Prostate gland (tissue), 2 donors: ENCODE measurements at regions of chr4 and their contacts with region 1.

Region 1: DNA sequence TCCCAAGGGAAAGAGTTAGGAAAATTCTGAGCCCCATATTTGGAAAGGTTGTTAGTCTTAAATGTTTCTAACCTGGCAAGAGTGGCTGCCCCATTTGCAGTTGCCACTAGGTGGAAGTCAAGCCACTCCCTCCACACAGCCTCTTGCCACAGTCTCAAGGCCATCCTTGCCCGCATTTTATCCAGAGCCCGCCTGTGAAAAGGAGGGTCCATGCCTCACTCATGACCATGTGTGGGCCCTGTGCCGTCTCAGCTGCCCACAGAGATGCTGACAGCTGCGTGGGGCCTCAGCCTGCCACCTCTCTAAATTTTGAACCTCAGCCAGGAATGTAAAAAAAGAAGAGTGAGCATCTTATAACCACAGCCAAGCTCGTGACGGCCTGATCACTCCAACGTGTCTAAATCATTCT is 201.5 kb upstream of the FAM241A start:
- DNase-seq: no peak
- H3K4me3 ChIP-seq: no peak overlapping the region
- H3K27ac ChIP-seq: no peak overlapping the region
- H3K4me1 ChIP-seq: no peaks in the 10 kb centered on the region
- H3K27me3 ChIP-seq: no peaks in the 10 kb centered on the region
- CTCF ChIP-seq: peak in 2 of 4 experiments; percentile 31 to 41
- POLR2A ChIP-seq: no peak

Region 2: DNA sequence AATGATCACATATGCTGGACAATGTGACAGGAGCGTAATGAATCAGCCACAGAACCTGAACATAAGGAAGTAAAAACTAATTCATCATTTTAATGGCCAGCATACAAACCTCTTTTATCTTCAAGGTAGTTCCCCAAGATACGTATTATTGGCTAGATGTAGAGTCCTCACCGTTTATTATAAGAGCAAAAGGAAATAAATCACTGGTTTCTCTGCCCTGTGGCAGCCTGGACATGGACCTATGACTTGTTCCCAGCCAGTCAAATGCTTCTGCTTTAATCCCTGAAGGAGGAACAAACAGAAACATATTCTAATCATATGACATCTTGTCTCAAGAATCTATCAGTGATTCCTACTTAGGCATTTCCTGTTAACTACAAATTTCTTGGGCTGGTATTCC is 114.6 kb after region 1 on chr4:
- intact Hi-C with region 1: loop called (anchors 5 kb)
- DNase-seq: no peak
- H3K4me3 ChIP-seq: no peak overlapping the region
- H3K27ac ChIP-seq: no peak overlapping the region
- H3K4me1 ChIP-seq: no peaks in the 10 kb centered on the region
- H3K27me3 ChIP-seq: no peaks in the 10 kb centered on the region
- CTCF ChIP-seq: no peak
- POLR2A ChIP-seq: no peak

Region 3: DNA sequence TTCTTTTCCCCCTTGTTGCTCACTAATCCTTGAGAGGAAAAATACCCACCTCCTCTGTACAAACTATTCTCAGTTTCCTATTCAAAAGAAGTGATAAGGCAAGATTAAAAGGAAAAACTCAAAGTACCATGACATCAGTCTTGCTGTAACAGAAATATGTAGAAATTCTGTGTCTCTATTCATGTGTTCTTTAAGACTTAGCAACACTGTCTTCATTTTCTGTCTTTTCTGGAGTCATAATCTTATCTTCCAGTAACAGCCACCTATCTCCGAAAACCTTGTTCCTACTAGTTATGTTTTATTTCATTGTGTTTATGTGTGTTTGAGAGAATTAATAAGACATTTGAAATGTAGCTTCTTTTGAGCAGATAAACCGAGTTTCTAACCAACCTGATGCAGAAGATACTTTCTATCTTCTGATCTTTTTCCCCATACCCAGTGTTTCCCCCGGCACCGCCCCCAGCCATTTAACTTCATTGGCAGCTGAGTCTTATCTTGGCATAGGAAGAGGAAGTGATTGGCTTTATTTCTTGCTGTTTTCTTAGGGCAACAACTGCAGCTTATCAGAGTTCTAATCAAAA is 209.5 kb after region 1 on chr4:
- intact Hi-C with region 1: no loop called
- DNase-seq: no peak
- H3K4me3 ChIP-seq: no peak overlapping the region
- H3K27ac ChIP-seq: no peak overlapping the region
- H3K4me1 ChIP-seq: no peaks in the 10 kb centered on the region
- H3K27me3 ChIP-seq: no peaks in the 10 kb centered on the region
- CTCF ChIP-seq: no peak
- POLR2A ChIP-seq: no peak